ENCODE measurements at regions of chr1 and their contacts with region 1.

Region 1: DNA sequence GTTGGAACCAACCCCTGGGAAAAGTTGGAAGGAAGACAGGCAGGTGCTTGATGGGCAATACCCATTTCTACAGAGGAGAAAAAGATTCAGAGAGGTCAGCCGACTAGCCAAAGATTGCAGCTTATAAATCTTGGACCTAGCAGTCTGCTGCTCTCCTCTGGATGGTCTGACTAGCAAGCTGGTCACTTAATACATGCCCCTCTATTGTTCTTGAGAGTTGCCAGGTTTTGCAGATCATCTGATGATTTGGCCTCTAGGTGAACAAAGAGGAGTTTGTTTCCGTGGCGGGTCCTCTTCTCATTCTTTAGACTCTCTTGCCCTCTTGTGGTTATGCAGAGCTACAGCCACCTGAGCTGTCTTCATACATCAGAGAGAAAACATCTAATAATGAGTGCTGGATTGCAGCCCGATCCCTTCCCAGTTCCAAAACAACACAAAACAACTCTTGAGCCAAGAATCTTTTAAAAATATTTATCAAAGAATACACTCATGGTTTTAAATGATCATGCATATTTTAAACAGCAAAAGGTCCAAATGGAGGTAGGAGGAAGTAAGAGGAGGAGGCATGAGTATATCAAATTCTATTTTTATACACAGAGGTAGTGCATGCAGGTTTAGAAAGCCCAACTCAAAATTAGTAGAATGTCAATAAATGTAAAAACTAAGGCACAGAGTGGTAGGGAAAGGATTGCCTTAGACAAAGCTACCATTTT is 115.7 kb downstream of the SLC30A10 start:
- DNase-seq: peak; percentile 26
- H3K4me3 ChIP-seq: no peak overlapping the region
- H3K27ac ChIP-seq: no peak overlapping the region
- H3K4me1 ChIP-seq: no peaks in the 10 kb centered on the region
- H3K27me3 ChIP-seq: peaks cover 0 to 6% of the 10 kb centered on the region in 2 experiments
- CTCF ChIP-seq: peak; percentile 49 to 57
- POLR2A ChIP-seq: no peak

Region 2: DNA sequence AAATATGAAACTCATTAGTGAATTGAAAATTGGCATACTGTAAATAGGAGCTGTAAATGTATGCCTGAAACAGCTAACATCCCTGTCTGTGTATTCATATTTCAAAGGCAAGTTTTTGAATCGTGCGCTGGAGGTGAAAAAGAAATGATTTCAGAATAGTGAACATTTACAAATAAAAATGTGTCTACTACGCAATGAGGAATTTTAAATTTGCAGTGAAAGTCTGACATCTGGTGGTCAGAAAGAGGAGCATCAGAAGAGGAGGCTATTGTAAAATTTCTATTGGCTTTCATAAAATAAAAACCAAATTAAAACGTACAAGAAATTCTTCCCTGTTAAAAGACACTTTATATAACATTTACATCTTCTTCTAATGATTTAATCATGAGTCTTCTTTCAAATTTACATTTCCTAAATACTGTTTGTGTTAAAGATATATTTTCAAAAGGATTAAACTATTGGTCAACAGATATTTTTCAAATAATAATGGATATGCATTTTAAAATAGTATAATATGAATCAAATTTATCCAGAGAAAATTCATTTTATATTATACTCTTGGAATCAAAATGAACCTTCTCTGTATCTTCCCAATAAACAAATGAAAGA is 1641.3 kb before region 1 on chr1:
- CTCF ChIA-PET with region 1: interaction called, 4 read pairs
- POLR2A ChIA-PET with region 1: no interaction called
- dilution Hi-C with region 1: no loop called
- intact Hi-C with region 1: loop called (anchors 10 kb)
- DNase-seq: peak; percentile 42
- H3K4me3 ChIP-seq: no peak overlapping the region
- H3K27ac ChIP-seq: no peak overlapping the region
- H3K4me1 ChIP-seq: no peaks in the 10 kb centered on the region
- H3K27me3 ChIP-seq: peaks cover 7 to 46% of the 10 kb centered on the region in 2 experiments
- CTCF ChIP-seq: peak; percentile 45 to 54
- POLR2A ChIP-seq: no peak

Region 3: GRCh38 chr1:218259800-218260199 is 1552.8 kb before region 1 on chr1:
- CTCF ChIA-PET with region 1: no interaction called
- POLR2A ChIA-PET with region 1: no interaction called
- dilution Hi-C with region 1: no loop called
- intact Hi-C with region 1: loop called (anchors 10 kb)
- DNase-seq: peak; percentile 8
- H3K4me3 ChIP-seq: no peak overlapping the region
- H3K27ac ChIP-seq: no peak overlapping the region
- H3K4me1 ChIP-seq: no peaks in the 10 kb centered on the region
- H3K27me3 ChIP-seq: peaks cover 1 to 5% of the 10 kb centered on the region in 2 experiments
- CTCF ChIP-seq: peak; percentile 24 to 31
- POLR2A ChIP-seq: no peak

Region 4: DNA sequence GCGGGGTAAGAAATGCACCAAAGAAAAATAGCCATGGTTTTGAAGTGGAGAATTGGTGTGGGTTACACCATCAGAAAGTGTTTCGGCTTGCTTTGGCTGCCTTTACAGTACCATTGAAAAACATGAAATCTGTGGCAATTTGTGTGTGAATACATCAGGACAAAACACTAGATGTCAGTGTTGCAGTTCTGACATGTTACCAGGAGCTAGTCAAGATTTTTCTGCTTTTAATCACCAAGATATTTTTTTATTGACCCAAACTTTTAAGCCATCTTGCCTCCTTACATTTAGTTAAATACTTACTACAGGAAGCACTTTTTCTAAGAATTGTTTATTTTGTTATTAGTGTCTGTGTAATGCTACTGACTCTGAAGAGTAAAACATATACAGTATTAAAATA is 1513.2 kb before region 1 on chr1:
- CTCF ChIA-PET with region 1: interaction called, 11 read pairs
- POLR2A ChIA-PET with region 1: no interaction called
- dilution Hi-C with region 1: no loop called
- intact Hi-C with region 1: no loop called
- DNase-seq: peak; percentile 61
- H3K4me3 ChIP-seq: no peak overlapping the region
- H3K27ac ChIP-seq: no peak overlapping the region
- H3K4me1 ChIP-seq: no peaks in the 10 kb centered on the region
- H3K27me3 ChIP-seq: no peaks in the 10 kb centered on the region
- CTCF ChIP-seq: peak; percentile 27 to 39
- POLR2A ChIP-seq: no peak

Region 5: DNA sequence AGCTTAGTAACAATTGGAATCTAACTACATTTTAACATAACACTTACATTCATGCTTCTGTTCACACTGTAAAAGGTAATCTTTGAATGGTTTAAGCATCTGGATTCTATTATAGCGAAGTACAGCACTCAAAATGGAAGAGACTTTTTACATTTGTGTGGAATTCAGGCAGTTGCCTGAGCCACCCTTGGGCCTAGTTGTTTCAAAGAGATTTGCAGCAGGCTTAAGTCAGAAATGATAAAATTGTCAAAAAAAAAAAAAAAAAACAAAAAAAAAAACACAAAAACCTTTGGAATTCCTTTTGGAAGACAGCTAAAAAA is 439.1 kb before region 1 on chr1:
- CTCF ChIA-PET with region 1: no interaction called
- POLR2A ChIA-PET with region 1: no interaction called
- dilution Hi-C with region 1: no loop called
- intact Hi-C with region 1: no loop called
- DNase-seq: no peak
- H3K4me3 ChIP-seq: no peak overlapping the region
- H3K27ac ChIP-seq: no peak overlapping the region
- H3K4me1 ChIP-seq: no peaks in the 10 kb centered on the region
- H3K27me3 ChIP-seq: no peaks in the 10 kb centered on the region
- CTCF ChIP-seq: no peak
- POLR2A ChIP-seq: no peak

Region 6: GRCh38 chr1:219660666-219661463 is 151.8 kb before region 1 on chr1:
- CTCF ChIA-PET with region 1: interaction called, 5 read pairs
- POLR2A ChIA-PET with region 1: no interaction called
- dilution Hi-C with region 1: no loop called
- intact Hi-C with region 1: loop called (anchors 2 kb)
- DNase-seq: peak; percentile 84
- H3K4me3 ChIP-seq: peak overlapping the region in 2 of 3 experiments; percentile 24 to 49
- H3K27ac ChIP-seq: no peak overlapping the region
- H3K4me1 ChIP-seq: peaks cover 2% of the 10 kb centered on the region
- H3K27me3 ChIP-seq: peaks cover 0 to 9% of the 10 kb centered on the region in 2 experiments
- CTCF ChIP-seq: peak; percentile 82 to 86
- POLR2A ChIP-seq: no peak

Region 7: GRCh38 chr1:219798283-219799030 is 14.2 kb before region 1 on chr1:
- CTCF ChIA-PET with region 1: interaction called, 17 read pairs
- POLR2A ChIA-PET with region 1: no interaction called
- dilution Hi-C with region 1: no loop called
- intact Hi-C with region 1: no loop called
- DNase-seq: no peak
- H3K4me3 ChIP-seq: no peak overlapping the region
- H3K27ac ChIP-seq: no peak overlapping the region
- H3K4me1 ChIP-seq: no peaks in the 10 kb centered on the region
- H3K27me3 ChIP-seq: no peaks in the 10 kb centered on the region
- CTCF ChIP-seq: no peak
- POLR2A ChIP-seq: no peak

Measured in endothelial cell of umbilical vein (primary cell).